ENCODE measurements at regions of chr6 and their contacts with region 1.

Region 1: DNA sequence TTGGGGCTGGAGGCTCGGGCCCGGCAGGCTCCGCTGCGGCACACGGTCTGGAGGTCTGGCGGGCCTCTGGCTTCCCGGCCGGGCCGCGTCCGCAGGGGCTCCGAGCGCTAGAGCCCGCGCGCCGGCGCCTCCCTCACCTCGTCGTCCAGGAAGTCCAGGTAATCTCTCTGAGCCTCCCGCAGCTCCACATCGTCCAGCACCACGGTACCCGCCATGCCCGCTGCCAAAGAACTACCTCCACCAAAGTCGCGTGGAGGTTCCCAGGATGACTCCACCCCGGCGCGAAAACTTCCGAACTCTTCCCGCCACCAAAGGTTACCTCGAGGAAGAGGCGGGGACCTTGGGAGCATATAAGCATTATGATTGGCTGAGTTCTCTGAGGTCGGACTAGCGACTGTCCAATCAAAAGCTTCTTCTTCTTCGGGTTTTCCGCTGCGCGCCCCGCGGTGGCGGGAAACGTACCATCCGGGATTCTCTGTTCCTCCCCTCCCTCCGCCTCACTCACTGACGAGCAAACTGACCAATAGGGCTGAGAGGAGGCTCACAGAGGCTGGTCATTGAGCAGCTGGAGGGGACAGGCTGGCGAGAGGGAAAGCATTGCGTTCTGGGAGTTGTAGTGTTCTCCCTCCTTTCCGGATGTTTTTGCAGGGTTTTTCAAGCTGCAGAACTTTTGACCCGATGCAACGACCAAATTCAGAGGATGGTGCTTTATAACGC is at the start of gene MCM3:
- DNase-seq: peak; percentile 99
- ATAC-seq: peak; percentile 98
- H3K4me3 Mint-ChIP-seq: no peak within 1 kb of the TSS
- H3K27ac Mint-ChIP-seq: peak within 1 kb of the TSS; percentile 17
- H3K4me1 Mint-ChIP-seq: peaks cover 51% of the 10 kb centered on the region
- H3K27me3 Mint-ChIP-seq: no peaks in the 10 kb centered on the region
- total RNA-seq, gene MCM3: 217 to 220 TPM

Region 2: GRCh38 chr6:52297433-52297832 is 12.8 kb after region 1 on chr6:
- CTCF ChIA-PET with region 1: interaction called, 147 read pairs
- POLR2A ChIA-PET with region 1: interaction called, 7 read pairs
- DNase-seq: no peak
- ATAC-seq: no peak
- H3K4me3 Mint-ChIP-seq: no peak overlapping the region
- H3K27ac Mint-ChIP-seq: no peak overlapping the region
- H3K4me1 Mint-ChIP-seq: peaks cover 24% of the 10 kb centered on the region
- H3K27me3 Mint-ChIP-seq: no peaks in the 10 kb centered on the region

Region 3: GRCh38 chr6:52337633-52338290 is 53.1 kb after region 1 on chr6:
- CTCF ChIA-PET with region 1: interaction called, 19 read pairs
- POLR2A ChIA-PET with region 1: interaction called, 3 read pairs
- DNase-seq: peak; percentile 32
- ATAC-seq: no peak
- H3K4me3 Mint-ChIP-seq: no peak overlapping the region
- H3K27ac Mint-ChIP-seq: peak overlapping the region; percentile 53
- H3K4me1 Mint-ChIP-seq: peaks cover 72% of the 10 kb centered on the region
- H3K27me3 Mint-ChIP-seq: no peaks in the 10 kb centered on the region

Region 4: DNA sequence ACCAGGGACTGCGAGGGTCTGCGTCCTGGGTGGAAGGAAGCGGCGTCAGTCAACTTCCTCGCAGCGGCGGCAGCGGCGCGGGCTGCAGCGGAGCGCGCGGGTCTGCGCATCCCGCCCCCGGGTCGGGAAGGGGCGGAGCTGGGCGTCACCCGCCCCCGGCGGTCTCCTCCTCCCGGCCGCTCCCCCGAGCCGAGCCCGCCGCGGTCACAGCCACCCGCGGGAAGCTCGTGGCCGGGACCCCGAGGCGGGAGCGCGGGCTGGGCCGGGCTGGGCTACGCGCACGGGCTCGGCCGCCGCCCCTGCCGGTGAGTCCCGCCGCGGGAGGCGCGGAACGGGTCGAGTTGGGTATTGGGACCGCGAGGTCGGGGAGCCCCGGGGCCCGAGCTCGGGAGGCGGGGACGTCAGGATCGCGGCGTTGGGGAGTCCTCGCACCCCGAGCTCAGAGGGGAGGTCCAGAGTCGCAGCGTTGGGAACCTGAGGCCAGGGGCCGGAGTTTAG is 77.4 kb after region 1 on chr6 and contains the start of gene PAQR8:
- CTCF ChIA-PET with region 1: interaction called, 103 read pairs
- POLR2A ChIA-PET with region 1: interaction called, 47 read pairs
- DNase-seq: peak; percentile 82
- ATAC-seq: peak; percentile 93
- H3K4me3 Mint-ChIP-seq: peak within 1 kb of the TSS; percentile 98
- H3K27ac Mint-ChIP-seq: peak within 1 kb of the TSS; percentile 92
- H3K4me1 Mint-ChIP-seq: peaks cover 34% of the 10 kb centered on the region
- H3K27me3 Mint-ChIP-seq: no peaks in the 10 kb centered on the region
- total RNA-seq, gene PAQR8: 23.0 to 25.7 TPM

Region 5: GRCh38 chr6:52399511-52400312 is 115.1 kb after region 1 on chr6:
- CTCF ChIA-PET with region 1: interaction called, 305 read pairs
- POLR2A ChIA-PET with region 1: interaction called, 16 read pairs
- DNase-seq: peak; percentile 61
- ATAC-seq: peak; percentile 25
- H3K4me3 Mint-ChIP-seq: no peak overlapping the region
- H3K27ac Mint-ChIP-seq: peak overlapping the region; percentile 91
- H3K4me1 Mint-ChIP-seq: peaks cover 60% of the 10 kb centered on the region
- H3K27me3 Mint-ChIP-seq: no peaks in the 10 kb centered on the region

Region 6: GRCh38 chr6:52517502-52518278 is 233.1 kb after region 1 on chr6:
- CTCF ChIA-PET with region 1: no interaction called
- POLR2A ChIA-PET with region 1: no interaction called
- DNase-seq: no peak
- ATAC-seq: no peak
- H3K4me3 Mint-ChIP-seq: no peak overlapping the region
- H3K27ac Mint-ChIP-seq: no peak overlapping the region
- H3K4me1 Mint-ChIP-seq: peaks cover 5% of the 10 kb centered on the region
- H3K27me3 Mint-ChIP-seq: no peaks in the 10 kb centered on the region

Region 7: GRCh38 chr6:52664186-52664990 is 379.8 kb after region 1 on chr6:
- CTCF ChIA-PET with region 1: interaction called, 18 read pairs
- POLR2A ChIA-PET with region 1: no interaction called
- DNase-seq: peak; percentile 84
- ATAC-seq: peak; percentile 97
- H3K4me3 Mint-ChIP-seq: no peak overlapping the region
- H3K27ac Mint-ChIP-seq: no peak overlapping the region
- H3K4me1 Mint-ChIP-seq: peaks cover 1% of the 10 kb centered on the region
- H3K27me3 Mint-ChIP-seq: no peaks in the 10 kb centered on the region